HAP-1 (cell line): ENCODE measurements at regions of chr6 and their contacts with region 1.

Region 1: DNA sequence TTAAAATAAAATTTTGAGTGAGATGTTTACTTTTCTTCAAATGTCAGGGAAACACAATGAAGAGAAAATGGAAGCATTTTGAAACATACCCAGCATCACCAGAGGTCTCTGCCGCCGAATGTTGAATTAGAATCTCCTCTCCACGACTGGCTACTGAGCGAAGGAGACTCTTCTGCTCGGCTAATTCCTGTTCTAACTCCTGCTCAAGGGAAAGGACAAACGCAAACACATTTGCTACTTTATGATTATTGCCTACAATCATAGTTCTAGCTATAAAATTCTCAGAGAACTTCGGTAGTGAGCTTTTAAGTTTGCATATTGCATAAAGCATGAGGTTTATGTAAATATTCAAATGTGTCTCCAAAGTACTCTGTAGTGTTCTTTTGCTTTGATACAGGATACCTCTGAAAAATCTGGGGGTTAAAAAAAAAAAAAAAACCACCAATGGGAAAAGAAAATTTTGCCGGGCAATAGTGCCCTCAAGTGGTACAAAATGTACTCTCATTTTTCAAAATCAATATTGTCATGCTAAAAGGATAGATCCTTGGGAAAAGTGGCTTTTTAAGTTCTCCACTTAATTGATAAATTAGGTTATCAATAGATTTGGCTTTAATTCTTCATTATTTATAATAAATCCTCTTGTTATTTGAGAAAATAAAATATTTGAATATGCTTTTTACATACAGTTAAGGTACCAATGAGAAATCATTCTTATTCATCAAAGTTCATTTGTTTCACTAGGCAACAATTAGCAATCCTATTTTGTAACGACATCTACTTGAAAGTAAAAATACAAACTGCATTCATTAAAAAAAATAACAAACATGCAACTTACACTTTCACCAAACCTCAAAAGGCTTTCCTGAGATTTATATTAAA is 369.0 kb downstream of the SYNE1 start:
- DNase-seq: peak; percentile 43 to 52
- H3K4me3 ChIP-seq: no peak overlapping the region
- H3K4me1 ChIP-seq: peaks cover 32% of the 10 kb centered on the region
- H3K27me3 ChIP-seq: no peaks in the 10 kb centered on the region

Region 2: DNA sequence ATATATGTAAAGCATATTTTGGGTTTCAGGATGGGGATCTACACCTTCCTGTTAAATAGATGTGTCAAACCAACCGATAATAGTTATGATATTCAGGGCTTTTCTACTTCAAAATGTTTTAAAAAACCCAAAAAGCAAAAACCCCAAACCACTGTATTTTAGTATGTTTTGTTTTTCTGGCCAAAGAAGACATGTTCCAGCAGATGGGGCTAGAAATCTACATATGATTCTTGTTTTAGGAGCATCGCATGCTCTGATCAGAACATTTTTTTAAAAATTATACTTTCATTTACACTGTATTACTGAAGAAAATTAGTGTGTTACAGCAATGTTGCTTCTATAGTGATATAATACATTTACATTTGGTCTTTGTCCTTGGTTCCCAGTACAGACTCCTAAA is 827.3 kb before region 1 on chr6:
- in situ Hi-C with region 1: loop called (anchors 25 kb)
- DNase-seq: no peak
- H3K4me3 ChIP-seq: no peak overlapping the region
- H3K4me1 ChIP-seq: no peaks in the 10 kb centered on the region
- H3K27me3 ChIP-seq: no peaks in the 10 kb centered on the region

Region 3: DNA sequence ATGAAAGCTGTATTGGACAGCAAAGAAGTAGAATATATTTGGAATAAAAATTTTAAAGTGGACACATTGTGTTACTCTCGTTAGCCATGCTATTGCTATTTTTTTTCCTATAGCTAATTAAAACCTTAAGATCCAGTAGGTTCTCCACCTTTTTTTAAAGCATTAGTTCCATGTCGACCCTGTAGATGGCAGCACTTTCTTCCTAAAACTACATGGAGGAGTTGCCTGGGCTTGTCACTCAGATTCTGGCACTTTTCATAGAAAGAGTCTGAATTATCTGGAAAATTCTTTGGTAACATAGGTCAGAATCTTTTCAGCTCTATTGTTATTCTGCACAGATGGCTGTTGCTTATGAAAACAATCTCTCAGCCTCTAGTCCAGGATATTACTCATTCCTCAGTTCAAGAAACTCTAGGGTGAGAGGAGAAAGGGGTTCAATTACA is 502.7 kb before region 1 on chr6:
- in situ Hi-C with region 1: loop called (anchors 10 kb)
- DNase-seq: peak; percentile 78 to 80
- H3K4me3 ChIP-seq: no peak overlapping the region
- H3K4me1 ChIP-seq: peaks cover 5% of the 10 kb centered on the region
- H3K27me3 ChIP-seq: 0 out of 2 replicates have a peak, but pooled peaks cover 2% of the 10 kb centered on the region